Adrenal gland (tissue), 19 donors: ENCODE measurements at regions of chr9 and their contacts with region 1.

Region 1: DNA sequence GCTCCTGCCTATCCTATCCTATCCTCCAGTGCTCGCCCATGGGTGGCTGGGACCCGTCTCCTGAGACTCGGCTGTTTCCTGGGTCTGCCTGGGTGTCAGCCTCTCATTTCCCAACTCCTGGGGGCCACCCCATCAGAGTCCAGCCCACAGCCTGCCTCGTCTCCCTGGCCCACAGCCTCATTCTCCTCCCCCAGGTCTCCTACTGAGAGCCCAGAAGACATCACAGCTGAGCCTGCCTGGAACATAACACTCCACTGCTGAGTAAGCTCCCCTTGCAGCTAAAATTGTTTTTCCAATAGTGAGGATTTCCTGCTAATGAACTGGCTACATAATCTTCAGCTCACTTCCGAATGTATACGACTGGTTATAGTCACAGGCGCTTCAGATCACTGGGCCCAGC is 95.3 kb downstream of the TTLL11 start:
- DNase-seq: no peak
- H3K4me3 ChIP-seq: no peak overlapping the region
- H3K27ac ChIP-seq: no peak overlapping the region
- H3K4me1 ChIP-seq: peaks cover 5 to 10% of the 10 kb centered on the region in 2 donors
- H3K27me3 ChIP-seq: no peaks in the 10 kb centered on the region
- CTCF ChIP-seq: no peak
- POLR2A ChIP-seq: no peak

Region 2: GRCh38 chr9:121545875-121546423 is 451.8 kb before region 1 on chr9:
- intact Hi-C with region 1: loop called (anchors 5 kb)
- DNase-seq: peak; percentile 95 to 99 (median 97)
- H3K4me3 ChIP-seq: peak overlapping the region in 1 of 4 donors; percentile 24
- H3K27ac ChIP-seq: no peak overlapping the region
- H3K4me1 ChIP-seq: peaks cover 7 to 17% of the 10 kb centered on the region in 2 donors
- H3K27me3 ChIP-seq: no peaks in the 10 kb centered on the region
- CTCF ChIP-seq: peak; percentile 94 to 99 (median 96)
- POLR2A ChIP-seq: no peak

Region 3: GRCh38 chr9:121598965-121599871 is 398.6 kb before region 1 on chr9:
- intact Hi-C with region 1: no loop called
- DNase-seq: peak; percentile 71 to 83 (median 78)
- H3K4me3 ChIP-seq: peak overlapping the region in 3 of 4 donors; percentile 23 to 81 (median 24)
- H3K27ac ChIP-seq: peak overlapping the region in 4 of 5 donors; percentile 13 to 89 (median 72)
- H3K4me1 ChIP-seq: peaks cover 19 to 29% of the 10 kb centered on the region in 2 donors
- H3K27me3 ChIP-seq: no peaks in the 10 kb centered on the region
- CTCF ChIP-seq: no peak
- POLR2A ChIP-seq: peak; percentile 41 to 49

Region 4: GRCh38 chr9:121698627-121699570 is 298.9 kb before region 1 on chr9:
- intact Hi-C with region 1: loop called in 1 of 2 experiments (anchors 5 kb)
- DNase-seq: peak in 6 of 7 donors; percentile 43 to 63 (median 56)
- H3K4me3 ChIP-seq: peak overlapping the region in 2 of 4 donors; percentile 19 to 92
- H3K27ac ChIP-seq: peak overlapping the region in 2 of 5 donors; percentile 40 to 54
- H3K4me1 ChIP-seq: peaks cover 11 to 19% of the 10 kb centered on the region in 2 donors
- H3K27me3 ChIP-seq: no peaks in the 10 kb centered on the region
- CTCF ChIP-seq: no peak
- POLR2A ChIP-seq: no peak

Region 5: DNA sequence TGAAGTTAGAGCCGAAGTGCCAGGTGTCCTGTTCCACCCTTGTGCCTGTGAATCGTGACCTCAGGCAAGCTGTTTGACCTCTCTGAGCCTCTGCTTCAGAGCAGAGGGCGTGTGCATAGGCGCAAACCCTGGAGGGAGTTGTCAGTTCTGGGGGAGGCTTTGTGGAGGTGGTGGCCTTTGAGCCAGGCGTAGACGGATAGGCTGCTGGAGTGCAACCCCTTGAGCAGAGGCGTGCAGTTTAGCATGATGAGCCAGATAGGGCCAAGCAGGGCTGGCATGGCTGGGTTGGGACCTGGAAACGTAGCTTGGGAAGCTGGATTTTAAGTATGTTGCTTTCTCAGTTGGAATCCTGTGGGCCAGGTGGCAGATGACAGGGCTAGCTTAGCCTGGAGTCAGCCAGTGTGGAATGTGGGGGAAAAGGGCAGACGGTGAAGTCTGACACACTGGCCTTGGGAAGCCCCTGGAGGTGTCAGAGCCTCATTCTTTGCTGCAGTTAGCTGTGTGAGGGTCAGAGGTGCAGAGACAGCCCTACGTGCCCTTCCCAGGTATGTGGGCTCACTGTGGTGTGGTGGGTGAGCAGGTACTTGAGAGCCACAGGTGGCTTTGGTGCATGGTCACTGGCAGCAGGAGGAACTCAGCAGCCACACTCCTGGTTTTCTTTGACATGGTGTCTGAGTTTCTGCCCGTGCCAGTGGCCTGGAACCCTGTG is 252.9 kb before region 1 on chr9:
- intact Hi-C with region 1: loop called in 1 of 2 experiments (anchors 5 kb)
- DNase-seq: peak in 2 of 7 donors; percentile 23 to 56
- H3K4me3 ChIP-seq: peak overlapping the region in 1 of 4 donors; percentile 59
- H3K27ac ChIP-seq: peak overlapping the region in 4 of 5 donors; percentile 71 to 91 (median 88)
- H3K4me1 ChIP-seq: peaks cover 63 to 87% of the 10 kb centered on the region in 2 donors
- H3K27me3 ChIP-seq: no peaks in the 10 kb centered on the region
- CTCF ChIP-seq: no peak
- POLR2A ChIP-seq: peak in 1 of 2 donors; percentile 7

Region 6: GRCh38 chr9:122051351-122052321 is 53.8 kb after region 1 on chr9:
- intact Hi-C with region 1: no loop called
- DNase-seq: no peak
- H3K4me3 ChIP-seq: no peak overlapping the region
- H3K27ac ChIP-seq: no peak overlapping the region
- H3K4me1 ChIP-seq: no peaks in the 10 kb centered on the region
- H3K27me3 ChIP-seq: no peaks in the 10 kb centered on the region
- CTCF ChIP-seq: no peak
- POLR2A ChIP-seq: no peak

Region 7: DNA sequence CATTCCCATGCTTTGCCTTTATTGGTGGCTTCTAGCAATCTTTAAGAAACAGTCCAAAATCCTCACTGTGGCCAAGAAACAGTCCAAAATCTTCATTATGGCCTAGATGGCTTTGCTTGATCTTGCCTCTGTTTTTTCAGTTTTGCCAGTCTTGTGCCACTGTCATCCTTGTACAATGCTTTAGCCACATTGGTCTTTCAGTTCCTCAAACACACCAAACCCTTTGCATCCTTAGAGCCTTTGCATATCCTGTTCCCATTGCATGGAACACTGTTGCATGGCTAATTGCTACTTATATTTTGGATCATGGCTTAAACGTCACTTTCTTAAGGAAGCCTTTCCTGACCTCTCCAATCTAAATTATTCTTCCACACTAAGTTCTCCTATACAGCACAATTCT is 289.0 kb after region 1 on chr9:
- intact Hi-C with region 1: no loop called
- DNase-seq: no peak
- H3K4me3 ChIP-seq: no peak overlapping the region
- H3K27ac ChIP-seq: no peak overlapping the region
- H3K4me1 ChIP-seq: no peaks in the 10 kb centered on the region
- H3K27me3 ChIP-seq: no peaks in the 10 kb centered on the region
- CTCF ChIP-seq: no peak
- POLR2A ChIP-seq: no peak